GM12878 (cell line): ENCODE measurements at regions of chr1 and their contacts with region 1.

Region 1: DNA sequence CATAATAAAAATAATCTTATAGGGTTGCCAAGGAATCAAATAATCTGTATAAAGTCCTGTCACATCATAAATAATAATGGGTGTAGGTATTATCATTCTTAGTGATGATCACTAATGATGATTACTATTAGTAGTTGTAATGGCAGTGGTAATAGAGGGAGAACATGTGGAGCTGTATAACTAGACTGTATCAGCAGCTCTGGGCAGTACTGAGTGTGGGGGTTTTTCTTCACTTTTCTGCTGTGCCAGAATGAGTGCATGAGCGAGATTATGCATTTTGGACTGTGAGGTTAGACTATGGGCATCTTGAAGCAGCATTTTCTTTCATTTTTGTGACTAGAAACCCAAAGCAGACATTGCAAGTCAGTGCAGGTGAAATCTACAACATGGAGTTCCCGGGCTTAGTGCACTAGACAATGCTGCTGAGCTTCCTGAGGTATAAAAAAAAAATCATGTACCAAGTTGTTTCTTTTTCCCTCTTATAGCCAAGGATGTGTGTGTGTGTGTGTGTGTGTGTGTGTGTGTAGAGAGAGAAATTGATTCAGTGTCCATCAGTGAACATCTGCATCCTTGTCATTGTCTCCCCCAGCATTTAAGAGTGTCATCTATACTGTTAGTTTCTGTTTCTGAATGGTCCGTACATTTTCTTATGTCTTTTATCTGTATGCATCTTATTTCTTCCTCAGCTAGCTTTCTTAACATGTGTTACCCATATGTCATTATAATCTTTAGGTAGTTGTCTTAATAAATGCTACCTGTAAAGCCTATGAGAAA is 86.6 kb downstream of the GIPC2 start:
- DNase-seq: no peak
- ATAC-seq: peak; percentile 59
- H3K4me3 ChIP-seq: no peak overlapping the region
- H3K27ac ChIP-seq: no peak overlapping the region
- H3K4me1 ChIP-seq: no peaks in the 10 kb centered on the region; the same call in 1 of the 2 replicates
- H3K27me3 ChIP-seq: no peaks in the 10 kb centered on the region
- CTCF ChIP-seq: no peak
- EP300 ChIP-seq: no peak
- POLR2A ChIP-seq: no peak
- RAD21 ChIP-seq: no peak

Region 2: GRCh38 chr1:77514921-77515776 is 617.2 kb before region 1 on chr1:
- CTCF ChIA-PET with region 1: no interaction called
- POLR2A ChIA-PET with region 1: no interaction called
- RAD21 ChIA-PET with region 1: no interaction called
- SMC1A ChIA-PET with region 1: no interaction called
- in situ Hi-C with region 1: no loop called
- intact Hi-C with region 1: no loop called
- DNase-seq: no peak
- ATAC-seq: peak; percentile 68
- H3K4me3 ChIP-seq: no peak overlapping the region
- H3K27ac ChIP-seq: no peak overlapping the region
- H3K4me1 ChIP-seq: no peaks in the 10 kb centered on the region
- H3K27me3 ChIP-seq: no peaks in the 10 kb centered on the region; a peak in 1 of 4 replicates
- CTCF ChIP-seq: 0 out of 6 replicates have a peak, but pooled peaks of 2 of the 3 experiments have one; percentile 3 to 4
- EP300 ChIP-seq: no peak
- POLR2A ChIP-seq: no peak
- RAD21 ChIP-seq: 0 out of 2 replicates have a peak, but pooled peaks have one; percentile 9

Region 3: GRCh38 chr1:78060857-78061563 is 71.4 kb before region 1 on chr1:
- CTCF ChIA-PET with region 1: no interaction called
- POLR2A ChIA-PET with region 1: no interaction called
- RAD21 ChIA-PET with region 1: no interaction called
- SMC1A ChIA-PET with region 1: no interaction called
- in situ Hi-C with region 1: no loop called
- intact Hi-C with region 1: no loop called
- DNase-seq: peak; percentile 28
- ATAC-seq: peak; percentile 89
- H3K4me3 ChIP-seq: no peak overlapping the region
- H3K27ac ChIP-seq: no peak overlapping the region
- H3K4me1 ChIP-seq: no peaks in the 10 kb centered on the region; the same call in none of the 2 replicates
- H3K27me3 ChIP-seq: no peaks in the 10 kb centered on the region; a peak in 1 of 4 replicates
- CTCF ChIP-seq: peak in 2 of 3 experiments; percentile 13 to 22; a peak in 1 of 6 replicates
- EP300 ChIP-seq: no peak
- POLR2A ChIP-seq: no peak
- RAD21 ChIP-seq: no peak

Region 4: GRCh38 chr1:78101514-78101913 is 30.8 kb before region 1 on chr1:
- CTCF ChIA-PET with region 1: no interaction called
- POLR2A ChIA-PET with region 1: no interaction called
- RAD21 ChIA-PET with region 1: no interaction called
- SMC1A ChIA-PET with region 1: no interaction called
- in situ Hi-C with region 1: no loop called
- intact Hi-C with region 1: no loop called
- DNase-seq: no peak
- ATAC-seq: no peak
- H3K4me3 ChIP-seq: no peak overlapping the region
- H3K27ac ChIP-seq: no peak overlapping the region
- H3K4me1 ChIP-seq: no peaks in the 10 kb centered on the region
- H3K27me3 ChIP-seq: no peaks in the 10 kb centered on the region
- CTCF ChIP-seq: no peak
- EP300 ChIP-seq: no peak
- POLR2A ChIP-seq: no peak
- RAD21 ChIP-seq: no peak

Region 5: GRCh38 chr1:78156805-78157521 is 24.6 kb after region 1 on chr1:
- CTCF ChIA-PET with region 1: interaction called, 10 read pairs
- POLR2A ChIA-PET with region 1: no interaction called
- RAD21 ChIA-PET with region 1: interaction called, 3 read pairs
- SMC1A ChIA-PET with region 1: no interaction called
- in situ Hi-C with region 1: no loop called
- intact Hi-C with region 1: no loop called
- DNase-seq: no peak
- ATAC-seq: no peak
- H3K4me3 ChIP-seq: no peak overlapping the region
- H3K27ac ChIP-seq: no peak overlapping the region
- H3K4me1 ChIP-seq: no peaks in the 10 kb centered on the region
- H3K27me3 ChIP-seq: no peaks in the 10 kb centered on the region
- CTCF ChIP-seq: no peak
- EP300 ChIP-seq: no peak
- POLR2A ChIP-seq: no peak
- RAD21 ChIP-seq: no peak

Region 6: GRCh38 chr1:78601068-78601467 is 468.7 kb after region 1 on chr1:
- CTCF ChIA-PET with region 1: interaction called, 76 read pairs
- POLR2A ChIA-PET with region 1: no interaction called
- RAD21 ChIA-PET with region 1: interaction called, 34 read pairs
- SMC1A ChIA-PET with region 1: interaction called, 41 read pairs
- in situ Hi-C with region 1: loop called (anchors 5 kb)
- intact Hi-C with region 1: no loop called
- DNase-seq: no peak
- ATAC-seq: no peak
- H3K4me3 ChIP-seq: no peak overlapping the region
- H3K27ac ChIP-seq: no peak overlapping the region
- H3K4me1 ChIP-seq: no peaks in the 10 kb centered on the region
- H3K27me3 ChIP-seq: no peaks in the 10 kb centered on the region
- CTCF ChIP-seq: no peak
- EP300 ChIP-seq: no peak
- POLR2A ChIP-seq: no peak
- RAD21 ChIP-seq: no peak